ENCODE measurements at regions of chr6 and their contacts with region 1.

Region 1: GRCh38 chr6:95577304-95578105 is at the start of gene MANEA:
- DNase-seq: peak; percentile 64 to 83 (median 79)
- ATAC-seq: peak; percentile 91
- H3K4me3 ChIP-seq: peak within 1 kb of the TSS; percentile 98
- H3K4me3 Mint-ChIP-seq: peak within 1 kb of the TSS; percentile 83 to 98 (median 96)
- H3K27ac ChIP-seq: peak within 1 kb of the TSS; percentile 80
- H3K27ac Mint-ChIP-seq: peak within 1 kb of the TSS; percentile 92 to 100 (median 97)
- H3K4me1 ChIP-seq: peaks cover 9 to 30% of the 10 kb centered on the region in 2 donors
- H3K4me1 Mint-ChIP-seq: peaks cover 28 to 71% (median 62%) of the 10 kb centered on the region in 7 donors
- H3K27me3 ChIP-seq: no peaks in the 10 kb centered on the region
- H3K27me3 Mint-ChIP-seq: no peaks in the 10 kb centered on the region
- total RNA-seq, gene MANEA: 3.8 to 25.7 (median 12.2) TPM

Region 2: GRCh38 chr6:95519228-95520037 is 58.1 kb before region 1 on chr6:
- CTCF ChIA-PET with region 1: no interaction called
- POLR2A ChIA-PET with region 1: no interaction called
- intact Hi-C with region 1: no loop called
- DNase-seq: no peak
- ATAC-seq: no peak
- H3K4me3 ChIP-seq: no peak overlapping the region
- H3K4me3 Mint-ChIP-seq: no peak overlapping the region
- H3K27ac ChIP-seq: no peak overlapping the region
- H3K27ac Mint-ChIP-seq: no peak overlapping the region
- H3K4me1 ChIP-seq: no peaks in the 10 kb centered on the region
- H3K4me1 Mint-ChIP-seq: no peaks in the 10 kb centered on the region
- H3K27me3 ChIP-seq: no peaks in the 10 kb centered on the region
- H3K27me3 Mint-ChIP-seq: peaks cover 0 to 4% (median 0%) of the 10 kb centered on the region in 5 donors

Region 3: DNA sequence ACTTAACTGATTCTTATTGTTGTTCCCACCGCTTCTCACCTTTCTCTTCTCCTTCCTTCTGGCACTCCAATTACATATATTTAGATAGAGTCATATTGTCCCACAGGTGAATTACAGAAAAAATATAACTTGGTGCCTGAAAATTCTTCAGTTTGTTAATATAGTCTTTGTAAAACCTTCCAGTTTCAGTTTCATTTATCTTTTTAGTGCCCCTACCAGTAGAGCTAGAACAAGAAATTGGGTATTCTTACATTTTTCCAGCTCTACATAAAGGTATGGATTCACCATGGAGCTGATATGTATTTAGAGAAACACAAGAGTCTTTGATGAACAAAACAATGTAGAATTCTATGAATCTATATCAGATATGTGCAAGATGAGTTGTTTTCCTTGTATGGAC is 10.5 kb after region 1 on chr6:
- CTCF ChIA-PET with region 1: no interaction called
- POLR2A ChIA-PET with region 1: interaction called, 3 read pairs
- intact Hi-C with region 1: loop called in 1 of 2 experiments (anchors 1 kb)
- DNase-seq: no peak
- ATAC-seq: no peak
- H3K4me3 ChIP-seq: no peak overlapping the region
- H3K4me3 Mint-ChIP-seq: peak overlapping the region in 9 of 10 donors; percentile 8 to 73 (median 52)
- H3K27ac ChIP-seq: no peak overlapping the region
- H3K27ac Mint-ChIP-seq: peak overlapping the region in 2 of 9 donors; percentile 1 to 75
- H3K4me1 ChIP-seq: peaks cover 0 to 10% of the 10 kb centered on the region in 2 donors
- H3K4me1 Mint-ChIP-seq: peaks cover 21 to 60% (median 49%) of the 10 kb centered on the region in 7 donors
- H3K27me3 ChIP-seq: no peaks in the 10 kb centered on the region
- H3K27me3 Mint-ChIP-seq: no peaks in the 10 kb centered on the region

Region 4: DNA sequence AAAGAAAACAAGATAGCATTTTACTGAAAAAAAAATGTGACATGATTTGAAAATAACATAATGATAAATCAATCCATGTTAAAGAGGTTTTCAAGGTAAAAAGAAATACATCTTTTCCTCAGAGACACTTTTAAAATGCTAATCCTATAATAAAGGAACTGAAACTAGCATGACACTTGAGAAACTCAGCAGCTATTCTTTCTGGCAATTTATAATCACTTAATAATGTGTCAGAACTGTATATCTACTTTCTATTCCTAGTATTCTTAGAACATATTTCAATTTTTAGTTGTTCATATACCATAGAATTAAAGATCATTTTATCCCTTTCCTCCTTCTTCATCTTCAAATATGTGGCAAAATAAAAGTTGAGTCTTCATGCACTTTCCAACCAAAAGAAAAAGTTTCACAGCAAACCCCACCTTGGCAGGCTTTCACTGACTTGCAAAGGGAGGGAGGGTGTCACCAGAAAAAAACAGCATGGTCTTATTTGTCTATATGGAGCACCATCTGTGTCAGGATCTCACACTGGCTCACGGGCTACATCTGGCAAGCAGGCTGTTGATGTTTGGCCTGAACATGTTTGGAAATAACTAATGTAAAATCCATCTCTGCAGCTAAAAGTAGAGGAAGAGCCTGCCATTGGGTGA is 1034.0 kb after region 1 on chr6:
- CTCF ChIA-PET with region 1: no interaction called
- POLR2A ChIA-PET with region 1: no interaction called
- intact Hi-C with region 1: no loop called
- DNase-seq: no peak
- ATAC-seq: no peak
- H3K4me3 ChIP-seq: no peak overlapping the region
- H3K4me3 Mint-ChIP-seq: no peak overlapping the region
- H3K27ac ChIP-seq: no peak overlapping the region
- H3K27ac Mint-ChIP-seq: peak overlapping the region in 1 of 9 donors; percentile 37
- H3K4me1 ChIP-seq: no peaks in the 10 kb centered on the region
- H3K4me1 Mint-ChIP-seq: no peaks in the 10 kb centered on the region
- H3K27me3 ChIP-seq: no peaks in the 10 kb centered on the region
- H3K27me3 Mint-ChIP-seq: peaks cover 4 to 20% (median 8%) of the 10 kb centered on the region in 5 donors

Region 5: DNA sequence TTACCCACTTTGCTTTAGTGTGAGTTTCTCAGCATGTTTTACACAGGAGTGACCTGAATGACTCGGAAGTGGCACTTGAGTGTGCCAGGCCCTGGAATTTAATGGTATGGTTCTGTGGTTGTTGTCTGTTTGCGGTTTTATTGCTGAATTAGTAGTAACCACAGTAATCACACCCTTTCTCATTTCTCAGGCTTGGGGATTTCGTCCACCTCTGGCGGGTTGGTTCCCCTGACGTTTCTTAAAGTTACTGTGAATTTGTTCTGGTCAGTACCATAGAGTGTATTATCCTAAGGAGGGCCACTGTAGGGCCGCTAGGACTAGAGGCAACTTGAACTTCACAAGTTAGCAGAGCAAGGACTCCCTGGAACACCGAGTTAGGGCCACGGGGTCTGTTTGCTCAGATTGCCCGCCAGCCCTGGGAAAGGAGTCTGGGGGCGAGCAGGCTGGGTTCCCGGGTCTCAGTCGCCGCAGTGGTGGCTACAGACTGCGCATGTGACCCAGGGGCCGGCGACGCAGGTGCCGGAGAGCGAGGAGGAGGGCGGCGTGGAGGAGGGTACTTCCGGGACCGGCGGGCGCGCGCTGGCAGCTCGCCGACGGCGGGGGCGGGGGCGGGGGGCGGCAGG is 1346.5 kb after region 1 on chr6:
- CTCF ChIA-PET with region 1: no interaction called
- POLR2A ChIA-PET with region 1: no interaction called
- intact Hi-C with region 1: loop called (anchors 1 to 2 kb)
- DNase-seq: peak in 1 of 9 donors; percentile 5
- ATAC-seq: peak; percentile 3
- H3K4me3 ChIP-seq: peak overlapping the region; percentile 68
- H3K4me3 Mint-ChIP-seq: peak overlapping the region; percentile 91 to 99 (median 98)
- H3K27ac ChIP-seq: peak overlapping the region; percentile 87
- H3K27ac Mint-ChIP-seq: peak overlapping the region; percentile 91 to 100 (median 99)
- H3K4me1 ChIP-seq: peaks cover 13 to 16% of the 10 kb centered on the region in 2 donors
- H3K4me1 Mint-ChIP-seq: peaks cover 8 to 50% (median 33%) of the 10 kb centered on the region in 7 donors
- H3K27me3 ChIP-seq: no peaks in the 10 kb centered on the region
- H3K27me3 Mint-ChIP-seq: peaks cover 0 to 22% (median 4%) of the 10 kb centered on the region in 5 donors

Region 6: GRCh38 chr6:97282726-97283617 is 1705.5 kb after region 1 on chr6 and contains the start of gene MMS22L:
- CTCF ChIA-PET with region 1: no interaction called
- POLR2A ChIA-PET with region 1: no interaction called
- intact Hi-C with region 1: loop called (anchors 1 to 2 kb)
- DNase-seq: peak; percentile 83 to 93 (median 90)
- ATAC-seq: peak; percentile 99
- H3K4me3 ChIP-seq: peak within 1 kb of the TSS; percentile 90
- H3K4me3 Mint-ChIP-seq: peak within 1 kb of the TSS; percentile 90 to 98 (median 96)
- H3K27ac ChIP-seq: peak within 1 kb of the TSS; percentile 70
- H3K27ac Mint-ChIP-seq: peak within 1 kb of the TSS; percentile 83 to 96 (median 89)
- H3K4me1 ChIP-seq: peaks cover 0 to 16% of the 10 kb centered on the region in 2 donors
- H3K4me1 Mint-ChIP-seq: peaks cover 5 to 37% (median 24%) of the 10 kb centered on the region in 7 donors
- H3K27me3 ChIP-seq: no peaks in the 10 kb centered on the region
- H3K27me3 Mint-ChIP-seq: peaks cover 0 to 8% (median 0%) of the 10 kb centered on the region in 5 donors
- total RNA-seq, gene MMS22L: 11.8 to 48.1 (median 12.9) TPM